Endothelial cell of umbilical vein (primary cell): ENCODE measurements at regions of chr1 and their contacts with region 1.

Region 1: GRCh38 chr1:19240673-19241538 is 10.4 kb downstream of the EMC1 start:
- DNase-seq: peak; percentile 54
- H3K4me3 ChIP-seq: no peak overlapping the region
- H3K27ac ChIP-seq: no peak overlapping the region
- H3K4me1 ChIP-seq: no peaks in the 10 kb centered on the region
- H3K27me3 ChIP-seq: no peaks in the 10 kb centered on the region
- CTCF ChIP-seq: peak; percentile 89
- POLR2A ChIP-seq: no peak

Region 2: DNA sequence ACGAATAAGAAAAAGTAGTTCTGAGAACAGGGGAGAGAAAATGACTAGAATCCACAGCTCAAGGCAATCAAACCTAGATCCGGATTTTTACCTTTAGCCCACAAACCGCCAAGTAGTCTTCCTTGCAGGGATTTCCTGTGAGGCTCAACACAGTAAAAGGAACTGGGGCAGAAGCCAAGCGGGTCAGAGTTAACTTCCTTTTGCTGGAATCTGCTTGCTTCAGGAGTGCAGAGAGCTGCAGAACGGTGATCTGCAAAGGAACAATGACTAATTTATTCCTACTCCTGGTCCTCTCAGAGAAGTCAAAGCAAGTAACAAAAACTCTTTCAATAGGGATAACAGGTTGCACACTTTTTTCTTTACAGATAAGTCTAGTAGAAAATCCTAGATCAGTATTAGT is 84.2 kb before region 1 on chr1:
- CTCF ChIA-PET with region 1: interaction called, 5 read pairs
- POLR2A ChIA-PET with region 1: no interaction called
- dilution Hi-C with region 1: no loop called
- intact Hi-C with region 1: loop called (anchors 1 kb)
- DNase-seq: peak; percentile 97
- H3K4me3 ChIP-seq: no peak overlapping the region
- H3K27ac ChIP-seq: no peak overlapping the region
- H3K4me1 ChIP-seq: peaks cover 19% of the 10 kb centered on the region
- H3K27me3 ChIP-seq: no peaks in the 10 kb centered on the region
- CTCF ChIP-seq: no peak
- POLR2A ChIP-seq: no peak

Region 3: DNA sequence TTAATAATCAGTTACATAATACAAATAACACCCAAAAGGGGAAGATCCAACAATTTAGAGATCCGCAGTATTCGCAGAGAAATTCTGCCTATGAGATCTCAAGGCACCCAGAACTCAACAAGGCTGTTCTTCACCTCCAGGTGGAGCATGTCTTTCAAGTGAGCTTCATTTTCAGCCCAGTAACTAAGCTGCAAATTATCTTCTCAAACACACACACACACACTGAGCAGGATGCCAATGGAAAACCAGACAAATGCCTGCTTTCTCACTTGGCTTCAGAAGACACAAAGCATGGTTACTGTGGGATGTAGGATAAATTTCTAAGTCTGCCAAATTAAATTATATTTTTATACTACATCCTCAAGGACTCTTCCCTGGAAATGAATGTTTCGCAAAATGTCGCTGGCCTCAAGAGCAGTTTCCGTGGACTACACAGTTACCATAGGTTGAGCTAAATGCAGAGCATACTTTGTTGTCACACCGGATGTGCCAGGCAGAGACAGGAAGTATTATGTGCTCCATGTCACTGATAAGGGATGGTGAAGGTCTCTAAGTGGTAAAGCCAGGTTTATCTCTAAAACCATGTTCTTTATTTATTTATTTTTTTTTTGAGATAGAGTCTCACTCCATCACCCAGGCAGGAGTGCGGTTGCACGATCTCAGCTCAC is 61.2 kb before region 1 on chr1:
- CTCF ChIA-PET with region 1: interaction called, 25 read pairs
- POLR2A ChIA-PET with region 1: no interaction called
- dilution Hi-C with region 1: no loop called
- intact Hi-C with region 1: loop called (anchors 1 kb)
- DNase-seq: peak; percentile 39
- H3K4me3 ChIP-seq: no peak overlapping the region
- H3K27ac ChIP-seq: no peak overlapping the region
- H3K4me1 ChIP-seq: no peaks in the 10 kb centered on the region
- H3K27me3 ChIP-seq: no peaks in the 10 kb centered on the region
- CTCF ChIP-seq: peak in 1 of 2 donors; percentile 21
- POLR2A ChIP-seq: no peak

Region 4: GRCh38 chr1:19186001-19186400 is 54.9 kb before region 1 on chr1:
- CTCF ChIA-PET with region 1: no interaction called
- POLR2A ChIA-PET with region 1: no interaction called
- dilution Hi-C with region 1: no loop called
- intact Hi-C with region 1: loop called (anchors 1 kb)
- DNase-seq: no peak
- H3K4me3 ChIP-seq: no peak overlapping the region
- H3K27ac ChIP-seq: no peak overlapping the region
- H3K4me1 ChIP-seq: peaks cover 6% of the 10 kb centered on the region
- H3K27me3 ChIP-seq: no peaks in the 10 kb centered on the region
- CTCF ChIP-seq: no peak
- POLR2A ChIP-seq: no peak

Region 5: GRCh38 chr1:19209990-19210771 is 30.7 kb before region 1 on chr1 and contains the start of gene UBR4:
- CTCF ChIA-PET with region 1: interaction called, 8 read pairs
- POLR2A ChIA-PET with region 1: interaction called, 3 read pairs
- dilution Hi-C with region 1: no loop called
- intact Hi-C with region 1: loop called (anchors 2 kb)
- DNase-seq: peak; percentile 96
- H3K4me3 ChIP-seq: peak within 1 kb of the TSS; percentile 26 to 94 (median 81)
- H3K27ac ChIP-seq: peak within 1 kb of the TSS; percentile 80
- H3K4me1 ChIP-seq: peaks cover 22% of the 10 kb centered on the region
- H3K27me3 ChIP-seq: no peaks in the 10 kb centered on the region
- CTCF ChIP-seq: no peak
- POLR2A ChIP-seq: peak; percentile 52
- total RNA-seq, gene UBR4: 146 and 150 TPM in 2 replicates

Region 6: GRCh38 chr1:19251305-19252196 is 10.6 kb after region 1 on chr1 and contains the starts of genes EMC1 and MRTO4:
- CTCF ChIA-PET with region 1: interaction called, 13 read pairs
- POLR2A ChIA-PET with region 1: no interaction called
- dilution Hi-C with region 1: no loop called
- intact Hi-C with region 1: no loop called
- DNase-seq: peak; percentile 89
- H3K4me3 ChIP-seq: peak within 1 kb of the TSS; percentile 59 to 81 (median 78)
- H3K27ac ChIP-seq: peak within 1 kb of the TSS; percentile 54
- H3K4me1 ChIP-seq: peaks cover 18% of the 10 kb centered on the region
- H3K27me3 ChIP-seq: no peaks in the 10 kb centered on the region
- CTCF ChIP-seq: no peak
- POLR2A ChIP-seq: peak; percentile 91
- total RNA-seq, gene EMC1: 77.5 and 84.8 TPM in 2 replicates
- total RNA-seq, gene MRTO4: 47.7 and 49.4 TPM in 2 replicates